ENCODE measurements at regions of chr6 and their contacts with region 1.

Region 1: DNA sequence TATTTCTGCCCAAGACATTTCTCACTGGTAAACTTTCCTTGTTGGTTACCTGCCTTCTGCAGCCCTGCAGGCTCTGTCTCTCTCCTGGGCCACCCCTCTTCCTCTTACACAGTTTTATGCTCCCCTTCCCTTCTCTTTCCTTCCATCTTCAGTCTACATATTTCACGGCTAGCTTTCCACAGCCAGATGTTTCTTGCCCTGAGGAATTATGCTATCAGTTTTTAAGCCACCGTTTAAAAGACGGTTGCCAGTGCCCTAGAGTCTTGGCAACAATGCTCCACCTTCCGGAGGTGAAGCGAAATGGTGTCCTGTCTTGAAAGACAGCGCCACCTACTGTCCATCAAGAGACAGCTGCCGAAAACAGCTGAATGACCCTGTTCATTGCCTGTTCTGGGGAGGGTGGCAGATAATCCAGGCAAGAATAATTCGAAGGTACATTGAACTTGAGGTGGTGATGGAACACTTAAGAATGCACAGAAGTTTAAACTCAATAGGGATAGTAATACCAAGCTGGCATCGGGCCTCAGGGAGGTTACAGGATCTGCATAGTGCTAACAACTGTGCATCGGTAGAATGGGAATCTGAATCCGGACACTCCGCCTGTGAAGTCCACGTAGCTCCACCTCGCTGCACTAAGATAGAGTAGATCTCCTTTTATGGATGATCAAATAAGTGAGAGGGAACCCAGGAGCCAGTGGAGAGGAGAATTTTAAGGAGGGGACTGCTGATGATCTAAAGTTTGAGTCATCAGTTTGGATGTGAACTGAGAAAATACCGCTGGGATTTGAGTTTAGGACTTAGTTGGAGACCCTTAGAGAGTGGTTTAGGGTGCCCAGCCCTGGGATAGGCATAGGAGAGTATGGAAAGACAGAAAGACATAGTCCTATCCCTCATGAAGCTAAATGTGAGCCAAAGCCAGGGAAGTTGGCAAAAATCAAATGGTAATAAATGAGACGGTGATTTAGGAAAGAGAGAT is 4.8 kb upstream of the TRIM40 start:
- DNase-seq: peak; percentile 83
- H3K4me3 ChIP-seq: peak overlapping the region in 1 of 2 experiments; percentile 18; a peak in 1 of 4 replicates
- H3K27ac ChIP-seq: no peak overlapping the region
- H3K4me1 ChIP-seq: no peaks in the 10 kb centered on the region
- H3K27me3 ChIP-seq: peaks cover 84% of the 10 kb centered on the region
- CTCF ChIP-seq: peak; percentile 99
- EP300 ChIP-seq: no peak
- RAD21 ChIP-seq: peak; percentile 77

Region 2: GRCh38 chr6:29720863-29721262 is 410.3 kb before region 1 on chr6:
- CTCF ChIA-PET with region 1: no interaction called
- POLR2A ChIA-PET with region 1: no interaction called
- DNase-seq: no peak
- H3K4me3 ChIP-seq: no peak overlapping the region
- H3K27ac ChIP-seq: no peak overlapping the region
- H3K4me1 ChIP-seq: no peaks in the 10 kb centered on the region; a peak in 1 of 4 replicates
- H3K27me3 ChIP-seq: peaks cover 49% of the 10 kb centered on the region; the same call in 1 of the 2 replicates
- CTCF ChIP-seq: no peak
- EP300 ChIP-seq: no peak
- RAD21 ChIP-seq: no peak

Region 3: DNA sequence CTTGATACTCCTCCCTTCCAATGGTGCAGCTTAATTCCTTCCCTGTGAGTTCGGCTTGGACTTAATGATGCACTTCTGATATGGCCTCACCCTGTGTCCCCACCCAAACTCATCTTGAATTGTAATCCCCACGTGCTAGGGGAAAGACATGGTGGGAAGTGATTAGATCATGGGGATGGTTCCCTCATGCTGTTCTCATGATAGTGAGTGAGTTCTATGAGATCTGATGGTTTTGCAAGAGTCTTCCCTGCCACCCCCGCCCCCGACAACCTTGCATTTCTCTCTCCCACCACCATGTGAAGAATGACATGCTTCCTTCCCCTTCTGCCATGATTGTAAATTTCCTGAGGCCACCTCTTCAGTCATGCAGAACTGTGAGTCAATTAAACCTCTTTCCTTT is 353.9 kb before region 1 on chr6:
- CTCF ChIA-PET with region 1: no interaction called
- POLR2A ChIA-PET with region 1: no interaction called
- DNase-seq: no peak
- H3K4me3 ChIP-seq: no peak overlapping the region
- H3K27ac ChIP-seq: no peak overlapping the region
- H3K4me1 ChIP-seq: no peaks in the 10 kb centered on the region
- H3K27me3 ChIP-seq: no peaks in the 10 kb centered on the region; the same call in 1 of the 2 replicates
- CTCF ChIP-seq: no peak
- EP300 ChIP-seq: no peak
- RAD21 ChIP-seq: no peak

Region 4: GRCh38 chr6:29847871-29848630 is 283.1 kb before region 1 on chr6:
- CTCF ChIA-PET with region 1: interaction called, 28 read pairs
- POLR2A ChIA-PET with region 1: no interaction called
- DNase-seq: peak; percentile 76
- H3K4me3 ChIP-seq: no peak overlapping the region; a peak in 1 of 4 replicates
- H3K27ac ChIP-seq: no peak overlapping the region
- H3K4me1 ChIP-seq: no peaks in the 10 kb centered on the region; a peak in 1 of 4 replicates
- H3K27me3 ChIP-seq: peaks cover 26% of the 10 kb centered on the region; the same call in 1 of the 2 replicates
- CTCF ChIP-seq: peak; percentile 95
- EP300 ChIP-seq: no peak
- RAD21 ChIP-seq: peak; percentile 99

Region 5: GRCh38 chr6:30053682-30054081 is 77.5 kb before region 1 on chr6:
- CTCF ChIA-PET with region 1: no interaction called
- POLR2A ChIA-PET with region 1: no interaction called
- DNase-seq: no peak
- H3K4me3 ChIP-seq: no peak overlapping the region
- H3K27ac ChIP-seq: no peak overlapping the region
- H3K4me1 ChIP-seq: no peaks in the 10 kb centered on the region
- H3K27me3 ChIP-seq: no peaks in the 10 kb centered on the region
- CTCF ChIP-seq: no peak
- EP300 ChIP-seq: no peak
- RAD21 ChIP-seq: no peak

Region 6: DNA sequence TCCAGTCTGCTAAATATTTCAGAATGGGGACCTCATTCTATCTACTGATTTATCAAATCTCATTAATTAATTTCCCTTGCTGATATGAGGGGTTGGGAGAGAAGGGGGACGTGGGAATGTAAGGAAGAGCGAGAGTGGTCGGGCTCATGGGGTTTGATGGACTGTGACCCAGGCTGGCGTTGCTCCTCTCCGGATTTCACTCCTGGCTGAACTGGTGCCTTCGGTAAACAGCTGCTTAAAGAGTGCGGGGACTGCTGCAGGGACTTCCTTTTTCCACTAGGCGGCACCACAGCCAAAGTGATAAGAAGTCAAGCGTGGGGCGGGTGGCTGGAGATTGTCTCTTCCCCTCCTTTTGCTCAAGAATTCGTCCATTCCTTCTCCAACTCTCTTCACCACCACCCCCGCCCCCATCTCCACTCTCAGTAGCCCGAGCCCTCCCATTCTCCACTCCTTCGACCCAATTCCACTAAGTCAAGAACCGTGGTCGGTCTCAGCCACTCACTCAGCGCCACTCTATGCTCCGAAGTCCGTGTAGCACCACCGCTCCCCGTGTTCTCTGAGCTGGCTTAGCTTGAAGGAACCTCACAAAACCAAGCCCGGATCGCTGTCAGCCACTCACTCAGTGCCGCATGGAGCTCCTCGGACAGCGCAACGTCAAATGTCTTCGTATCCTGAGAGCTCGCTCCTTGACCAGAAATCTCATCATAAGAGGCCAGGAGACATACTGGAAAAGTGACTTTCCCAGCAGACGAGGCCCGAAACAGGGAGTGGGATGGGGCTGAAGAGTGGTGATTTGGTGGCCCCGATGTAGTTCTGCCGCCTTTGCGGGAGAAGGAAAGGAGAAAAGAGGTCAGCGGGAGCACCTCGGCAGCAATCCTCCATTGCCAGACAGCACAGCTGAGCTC is 28.0 kb before region 1 on chr6:
- CTCF ChIA-PET with region 1: interaction called, 207 read pairs
- POLR2A ChIA-PET with region 1: no interaction called
- DNase-seq: peak; percentile 84
- H3K4me3 ChIP-seq: peak overlapping the region; percentile 37 to 64
- H3K27ac ChIP-seq: no peak overlapping the region
- H3K4me1 ChIP-seq: peaks cover 5 to 11% of the 10 kb centered on the region in 2 experiments; a peak in 2 of 4 replicates
- H3K27me3 ChIP-seq: peaks cover 64% of the 10 kb centered on the region
- CTCF ChIP-seq: peak; percentile 88
- EP300 ChIP-seq: no peak
- RAD21 ChIP-seq: peak; percentile 80

Region 7: DNA sequence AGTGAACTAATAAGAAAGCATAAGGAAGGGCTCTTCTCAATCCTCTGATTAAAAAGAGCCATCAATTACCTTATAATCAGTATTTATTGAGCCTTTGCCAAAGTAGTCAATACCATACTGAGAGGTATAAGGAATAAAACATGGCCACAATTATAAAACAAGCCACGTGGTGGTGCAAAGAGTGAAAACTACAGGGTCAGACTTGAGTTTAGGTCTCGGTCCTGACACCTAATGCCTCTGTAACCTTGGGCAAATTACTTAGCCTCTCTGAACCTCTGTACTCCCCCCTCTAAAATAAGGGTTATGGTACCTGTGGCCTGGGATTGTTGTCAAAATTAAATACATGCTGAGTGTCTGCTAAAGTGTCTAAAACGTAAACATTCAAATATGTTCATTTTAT is 18.1 kb after region 1 on chr6:
- CTCF ChIA-PET with region 1: interaction called, 91 read pairs
- POLR2A ChIA-PET with region 1: no interaction called
- DNase-seq: no peak
- H3K4me3 ChIP-seq: no peak overlapping the region
- H3K27ac ChIP-seq: no peak overlapping the region
- H3K4me1 ChIP-seq: peaks cover 0 to 2% of the 10 kb centered on the region in 2 experiments; a peak in 1 of 4 replicates
- H3K27me3 ChIP-seq: peaks cover 22% of the 10 kb centered on the region
- CTCF ChIP-seq: peak; percentile 24; the same call in 1 of the 2 replicates
- EP300 ChIP-seq: no peak
- RAD21 ChIP-seq: no peak

Region 8: GRCh38 chr6:30169658-30170614 is 38.8 kb after region 1 on chr6:
- CTCF ChIA-PET with region 1: interaction called, 17 read pairs
- POLR2A ChIA-PET with region 1: no interaction called
- DNase-seq: peak; percentile 73
- H3K4me3 ChIP-seq: no peak overlapping the region; a peak in 1 of 4 replicates
- H3K27ac ChIP-seq: no peak overlapping the region
- H3K4me1 ChIP-seq: peaks cover 0 to 3% of the 10 kb centered on the region in 2 experiments; a peak in 1 of 4 replicates
- H3K27me3 ChIP-seq: peaks cover 67% of the 10 kb centered on the region
- CTCF ChIP-seq: peak; percentile 82
- EP300 ChIP-seq: no peak
- RAD21 ChIP-seq: peak; percentile 82

Measured in SK-N-SH (cell line).